CD14-positive monocyte (primary cell): ENCODE measurements at regions of chr11 and their contacts with region 1.

Region 1: DNA sequence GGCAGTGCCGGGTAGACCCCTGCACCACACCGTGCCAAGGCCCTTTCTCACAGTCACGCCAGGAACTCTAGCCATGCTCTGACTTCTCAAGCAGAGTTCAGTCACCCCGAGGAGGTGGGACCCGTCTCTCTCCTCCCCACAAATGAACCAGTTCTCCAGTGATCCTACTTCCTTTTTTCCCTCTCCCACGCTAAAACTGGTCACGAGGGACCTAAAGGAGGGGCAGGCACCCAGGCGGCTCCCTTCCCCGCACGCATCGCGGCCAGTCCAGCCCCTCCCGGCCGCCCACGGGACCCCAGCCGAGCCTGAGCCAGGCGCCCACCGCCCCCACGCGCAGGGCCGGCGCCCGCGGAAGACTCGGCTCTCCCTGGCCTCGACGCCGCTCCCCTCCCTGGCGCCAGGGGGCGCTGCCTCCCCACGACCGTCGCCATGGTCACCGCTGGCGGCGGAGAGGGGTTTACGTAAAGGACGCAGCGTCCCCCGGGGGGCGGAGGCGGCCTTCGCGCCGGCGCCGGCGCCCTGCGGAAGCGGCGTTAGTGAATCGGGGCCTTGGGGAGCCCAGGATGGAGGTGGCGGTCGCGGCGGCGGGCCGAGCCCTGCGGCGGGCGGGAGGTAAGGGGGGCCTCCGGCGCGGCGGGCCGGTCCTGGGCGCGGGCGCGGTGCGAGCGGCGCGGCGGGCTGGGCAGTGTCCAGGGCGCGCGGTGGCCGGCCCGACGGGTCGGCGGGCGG is at the start of gene DAGLA:
- DNase-seq: peak; percentile 84 to 90 (median 87)
- H3K4me3 ChIP-seq: peak within 1 kb of the TSS; percentile 40 to 76 (median 45)
- H3K4me3 Mint-ChIP-seq: peak within 1 kb of the TSS; percentile 81 to 90
- H3K27ac ChIP-seq: peak within 1 kb of the TSS in 1 of 2 donors; percentile 82
- H3K27ac Mint-ChIP-seq: peak within 1 kb of the TSS; percentile 73 to 93 (median 88)
- H3K4me1 ChIP-seq: peaks cover 34 to 48% of the 10 kb centered on the region in 2 donors
- H3K4me1 Mint-ChIP-seq: peaks cover 10% of the 10 kb centered on the region
- H3K27me3 ChIP-seq: peaks cover 0 to 31% of the 10 kb centered on the region in 2 donors
- H3K27me3 Mint-ChIP-seq: peaks cover 3 to 21% (median 13%) of the 10 kb centered on the region in 3 donors
- CTCF ChIP-seq: peak; percentile 99
- polyA plus RNA-seq, gene DAGLA: 0.16 to 6.7 (median 0.73) TPM

Region 2: DNA sequence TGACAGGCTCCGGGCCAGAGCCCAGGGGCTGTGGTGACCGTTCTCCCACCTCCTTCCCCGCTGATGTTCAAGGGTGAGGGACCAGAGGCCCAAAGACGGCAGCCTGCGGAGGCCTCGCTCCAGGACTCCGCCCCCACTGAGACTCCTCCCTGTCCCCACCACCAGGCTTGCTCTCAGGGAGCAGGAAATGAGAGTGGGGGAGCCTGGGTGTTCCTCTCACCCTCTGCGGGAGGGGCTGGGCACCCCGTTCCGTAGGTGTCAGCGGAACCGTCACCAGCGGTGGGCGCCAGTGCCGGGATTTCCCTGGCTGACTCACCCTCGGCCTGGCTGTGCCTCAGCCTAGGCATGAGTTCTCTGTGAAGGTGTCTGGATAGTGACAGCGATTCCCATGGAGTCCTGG is 15.9 kb after region 1 on chr11:
- intact Hi-C with region 1: loop called in 1 of 2 experiments (anchors 1 kb)
- DNase-seq: peak; percentile 98 to 99 (median 98)
- H3K4me3 ChIP-seq: peak overlapping the region in 2 of 3 experiments; percentile 26 to 60
- H3K4me3 Mint-ChIP-seq: peak overlapping the region; percentile 65 to 84
- H3K27ac ChIP-seq: peak overlapping the region; percentile 87 to 95
- H3K27ac Mint-ChIP-seq: peak overlapping the region; percentile 93 to 97 (median 95)
- H3K4me1 ChIP-seq: peaks cover 62 to 70% of the 10 kb centered on the region in 2 donors
- H3K4me1 Mint-ChIP-seq: peaks cover 65% of the 10 kb centered on the region
- H3K27me3 ChIP-seq: no peaks in the 10 kb centered on the region
- H3K27me3 Mint-ChIP-seq: peaks cover 0 to 2% (median 0%) of the 10 kb centered on the region in 3 donors
- CTCF ChIP-seq: no peak

Region 3: GRCh38 chr11:61718621-61719302 is 38.7 kb after region 1 on chr11:
- intact Hi-C with region 1: loop called in 1 of 2 experiments (anchors 5 kb)
- DNase-seq: no peak
- H3K4me3 ChIP-seq: no peak overlapping the region
- H3K4me3 Mint-ChIP-seq: no peak overlapping the region
- H3K27ac ChIP-seq: no peak overlapping the region
- H3K27ac Mint-ChIP-seq: no peak overlapping the region
- H3K4me1 ChIP-seq: peaks cover 40 to 44% of the 10 kb centered on the region in 2 donors
- H3K4me1 Mint-ChIP-seq: peaks cover 46% of the 10 kb centered on the region
- H3K27me3 ChIP-seq: no peaks in the 10 kb centered on the region
- H3K27me3 Mint-ChIP-seq: peaks cover 0 to 4% (median 3%) of the 10 kb centered on the region in 3 donors
- CTCF ChIP-seq: no peak

Region 4: GRCh38 chr11:61733120-61733978 is 53.3 kb after region 1 on chr11:
- intact Hi-C with region 1: loop called (anchors 1 to 2 kb)
- DNase-seq: peak; percentile 86 to 95 (median 89)
- H3K4me3 ChIP-seq: no peak overlapping the region
- H3K4me3 Mint-ChIP-seq: no peak overlapping the region
- H3K27ac ChIP-seq: peak overlapping the region in 1 of 2 donors; percentile 76
- H3K27ac Mint-ChIP-seq: peak overlapping the region in 6 of 7 donors; percentile 70 to 81 (median 73)
- H3K4me1 ChIP-seq: peaks cover 0 to 5% of the 10 kb centered on the region in 2 donors
- H3K4me1 Mint-ChIP-seq: peaks cover 7% of the 10 kb centered on the region
- H3K27me3 ChIP-seq: no peaks in the 10 kb centered on the region
- H3K27me3 Mint-ChIP-seq: peaks cover 0 to 1% (median 0%) of the 10 kb centered on the region in 3 donors
- CTCF ChIP-seq: peak; percentile 94